Naive thymus-derived CD8-positive, alpha-beta T cell (primary cell): ENCODE measurements at regions of chr14 and their contacts with region 1.

Region 1: DNA sequence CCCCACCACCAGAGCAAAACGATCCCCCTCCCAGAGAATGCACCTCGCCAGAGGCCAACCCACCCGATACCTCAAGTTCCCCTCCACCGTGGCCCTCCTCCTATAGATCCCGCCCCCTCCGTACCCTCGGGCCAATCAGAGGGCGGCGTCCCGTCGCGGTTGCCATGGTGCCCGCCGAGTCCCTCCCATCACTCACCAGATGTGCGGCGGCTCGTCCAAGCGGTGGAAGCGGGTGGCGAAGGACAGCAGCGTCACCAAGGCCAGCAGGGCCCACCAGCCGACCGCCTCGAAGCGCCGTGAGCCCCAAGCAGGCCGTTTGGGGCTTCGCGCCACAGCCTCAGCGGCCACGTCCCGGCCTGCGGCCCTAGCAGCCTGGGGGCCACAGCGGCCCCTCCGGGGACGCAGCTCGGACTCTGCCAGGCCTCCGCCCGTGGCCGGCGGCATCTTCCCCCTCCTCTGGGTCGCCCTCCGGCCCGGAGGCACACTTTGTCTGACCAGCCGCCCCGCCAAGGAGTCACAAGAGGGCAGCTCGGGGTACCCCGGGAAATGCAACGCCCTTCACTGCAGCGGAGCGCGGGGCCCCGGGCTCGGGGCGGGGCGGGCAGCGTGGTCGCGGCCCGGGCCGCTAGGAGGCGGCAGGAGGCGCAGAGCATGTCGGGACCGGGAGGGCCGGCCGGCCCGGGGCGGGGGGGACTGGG is at the start of gene POMT2:
- DNase-seq: peak; percentile 86 to 96 (median 92)
- ATAC-seq: peak; percentile 61 to 64
- H3K4me3 Mint-ChIP-seq: peak within 1 kb of the TSS; percentile 96 to 100 (median 98)
- H3K27ac Mint-ChIP-seq: peak within 1 kb of the TSS; percentile 97 to 100 (median 99)
- H3K4me1 Mint-ChIP-seq: peaks cover 7 to 23% (median 18%) of the 10 kb centered on the region in 4 donors
- H3K27me3 Mint-ChIP-seq: no peaks in the 10 kb centered on the region
- polyA plus RNA-seq, gene POMT2: 0.25 to 0.50 (median 0.40) TPM

Region 2: GRCh38 chr14:77097700-77098528 is 222.5 kb before region 1 on chr14 and contains the start of gene CIPC:
- POLR2A ChIA-PET with region 1: interaction called, 11 read pairs
- DNase-seq: peak; percentile 95 to 100 (median 99)
- ATAC-seq: peak; percentile 89
- H3K4me3 Mint-ChIP-seq: peak within 1 kb of the TSS; percentile 88 to 99 (median 96)
- H3K27ac Mint-ChIP-seq: peak within 1 kb of the TSS; percentile 95 to 100 (median 97)
- H3K4me1 Mint-ChIP-seq: peaks cover 25 to 51% (median 47%) of the 10 kb centered on the region in 4 donors
- H3K27me3 Mint-ChIP-seq: peaks cover 0 to 1% (median 0%) of the 10 kb centered on the region in 5 donors
- polyA plus RNA-seq, gene CIPC: 4.4 to 7.7 (median 4.7) TPM

Region 3: DNA sequence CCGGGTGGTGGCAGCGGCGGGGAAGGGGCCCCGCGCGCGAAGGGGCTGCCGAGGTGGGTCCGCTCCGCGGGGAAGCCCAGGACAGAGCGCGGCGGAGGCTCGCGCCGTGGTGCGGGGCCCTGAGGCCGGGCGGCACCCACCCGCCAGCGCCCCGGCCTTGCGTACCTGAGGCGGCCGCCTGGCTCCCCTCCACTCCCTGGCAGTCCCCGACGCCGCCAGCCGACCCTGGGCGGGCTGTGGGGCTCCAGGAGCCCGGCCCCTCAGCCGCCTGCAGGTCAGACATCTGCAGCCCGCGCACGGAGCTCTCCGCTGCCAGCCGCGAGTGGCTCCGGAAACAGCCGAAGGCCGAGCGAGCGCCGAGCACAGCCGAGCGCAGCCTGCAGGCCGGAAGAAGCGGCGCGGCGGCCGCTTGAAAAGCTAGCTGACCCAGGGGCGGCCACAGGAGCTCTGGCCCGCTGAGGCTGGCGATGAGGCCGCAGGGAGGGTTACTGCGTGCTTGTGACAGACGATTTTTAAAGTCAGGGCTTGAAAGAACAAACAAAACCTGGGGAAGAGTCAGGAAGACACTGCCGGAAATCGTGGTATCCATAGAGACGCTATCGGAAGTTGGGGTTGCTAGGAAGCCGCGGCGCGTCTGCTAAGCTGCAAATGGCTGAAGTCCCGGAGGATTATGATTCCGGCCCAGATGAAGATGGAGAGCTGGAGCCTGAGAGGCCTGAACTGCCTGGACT is 56.5 kb after region 1 on chr14 and contains the starts of genes SAMD15 and TMED8:
- POLR2A ChIA-PET with region 1: interaction called, 28 read pairs
- DNase-seq: peak; percentile 78 to 92 (median 85)
- ATAC-seq: peak; percentile 95 to 97
- H3K4me3 Mint-ChIP-seq: peak within 1 kb of the TSS in 8 of 10 donors; percentile 89 to 93 (median 92)
- H3K27ac Mint-ChIP-seq: peak within 1 kb of the TSS in 8 of 10 donors; percentile 83 to 94 (median 89)
- H3K4me1 Mint-ChIP-seq: peaks cover 24 to 41% (median 36%) of the 10 kb centered on the region in 4 donors
- H3K27me3 Mint-ChIP-seq: peaks cover 0 to 4% (median 0%) of the 10 kb centered on the region in 5 donors
- polyA plus RNA-seq, gene SAMD15: 0.07 TPM in 1 of 3 donors, not detected in the others
- polyA plus RNA-seq, gene TMED8: 1.8 to 3.0 (median 2.1) TPM

Region 4: DNA sequence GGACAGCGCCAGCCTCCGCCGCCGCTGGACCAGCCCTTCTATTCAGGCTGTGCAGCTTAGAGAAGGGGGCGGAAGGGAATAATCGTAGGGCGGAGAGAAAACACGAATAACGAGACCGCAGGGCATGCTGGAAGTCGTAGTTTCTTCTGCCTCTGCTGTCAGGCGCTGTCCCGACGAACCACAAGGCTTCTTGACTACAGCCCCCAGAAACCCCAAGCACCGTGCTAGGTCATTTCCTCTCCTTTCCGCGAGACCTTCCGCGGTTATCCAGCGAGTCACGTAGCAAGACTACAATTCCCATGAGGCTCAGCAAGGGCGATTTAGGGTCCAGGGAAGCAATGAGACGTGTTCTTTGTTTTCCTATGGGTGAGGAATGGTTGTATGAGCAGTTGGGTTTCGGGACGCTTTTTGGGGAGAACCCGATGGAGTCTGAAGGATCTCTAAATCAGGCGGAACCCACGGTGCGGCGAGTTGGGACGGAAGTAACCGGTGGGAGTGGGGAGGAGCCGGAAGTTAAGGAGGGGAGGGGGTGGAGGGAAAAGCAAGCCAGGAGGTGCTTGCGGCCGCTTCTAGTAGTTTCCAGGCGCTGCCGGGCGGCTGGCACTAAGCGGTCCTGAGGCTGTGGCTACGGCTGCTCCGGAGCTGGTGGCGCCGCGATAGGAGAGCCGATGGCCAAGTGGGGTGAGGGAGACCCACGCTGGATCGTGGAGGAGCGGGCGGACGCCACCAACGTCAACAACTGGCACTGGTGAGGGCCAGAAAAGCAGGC is 137.3 kb after region 1 on chr14 and contains the starts of genes AHSA1 and VIPAS39:
- POLR2A ChIA-PET with region 1: interaction called, 20 read pairs
- DNase-seq: peak; percentile 78 to 98 (median 94)
- ATAC-seq: peak; percentile 91 to 97
- H3K4me3 Mint-ChIP-seq: peak within 1 kb of the TSS; percentile 97 to 100 (median 100)
- H3K27ac Mint-ChIP-seq: peak within 1 kb of the TSS; percentile 82 to 100 (median 99)
- H3K4me1 Mint-ChIP-seq: peaks cover 21 to 59% (median 53%) of the 10 kb centered on the region in 4 donors
- H3K27me3 Mint-ChIP-seq: no peaks in the 10 kb centered on the region
- polyA plus RNA-seq, gene AHSA1: 112 to 171 (median 123) TPM
- polyA plus RNA-seq, gene VIPAS39: 6.1 to 11.1 (median 10.8) TPM